ENCODE measurements at regions of chr2 and their contacts with region 1.

Region 1: GRCh38 chr2:191051825-191052778 is 38.1 kb upstream of the STAT1 start:
- DNase-seq: peak in 3 of 9 experiments; percentile 60 to 77 (median 67)
- ATAC-seq: peak; percentile 72
- H3K4me3 ChIP-seq: no peak overlapping the region
- H3K4me3 Mint-ChIP-seq: no peak overlapping the region
- H3K27ac ChIP-seq: peak overlapping the region in 1 of 2 experiments; percentile 43
- H3K27ac Mint-ChIP-seq: no peak overlapping the region
- H3K4me1 ChIP-seq: peaks cover 18% of the 10 kb centered on the region
- H3K4me1 Mint-ChIP-seq: peaks cover 26% of the 10 kb centered on the region
- H3K27me3 ChIP-seq: no peaks in the 10 kb centered on the region
- H3K27me3 Mint-ChIP-seq: no peaks in the 10 kb centered on the region
- CTCF ChIP-seq: peak; percentile 99

Region 2: GRCh38 chr2:191066197-191066918 is 14.3 kb after region 1 on chr2:
- CTCF ChIA-PET with region 1: interaction called, 68 read pairs
- POLR2A ChIA-PET with region 1: interaction called, 15 read pairs
- intact Hi-C with region 1: loop called in 1 of 2 experiments (anchors 1 kb)
- DNase-seq: peak in 1 of 9 experiments; percentile 46
- ATAC-seq: no peak
- H3K4me3 ChIP-seq: peak overlapping the region in 1 of 2 experiments; percentile 48
- H3K4me3 Mint-ChIP-seq: peak overlapping the region; percentile 75
- H3K27ac ChIP-seq: peak overlapping the region; percentile 4 to 62
- H3K27ac Mint-ChIP-seq: peak overlapping the region; percentile 86
- H3K4me1 ChIP-seq: peaks cover 76% of the 10 kb centered on the region
- H3K4me1 Mint-ChIP-seq: peaks cover 84% of the 10 kb centered on the region
- H3K27me3 ChIP-seq: no peaks in the 10 kb centered on the region
- H3K27me3 Mint-ChIP-seq: no peaks in the 10 kb centered on the region
- CTCF ChIP-seq: no peak

Region 3: DNA sequence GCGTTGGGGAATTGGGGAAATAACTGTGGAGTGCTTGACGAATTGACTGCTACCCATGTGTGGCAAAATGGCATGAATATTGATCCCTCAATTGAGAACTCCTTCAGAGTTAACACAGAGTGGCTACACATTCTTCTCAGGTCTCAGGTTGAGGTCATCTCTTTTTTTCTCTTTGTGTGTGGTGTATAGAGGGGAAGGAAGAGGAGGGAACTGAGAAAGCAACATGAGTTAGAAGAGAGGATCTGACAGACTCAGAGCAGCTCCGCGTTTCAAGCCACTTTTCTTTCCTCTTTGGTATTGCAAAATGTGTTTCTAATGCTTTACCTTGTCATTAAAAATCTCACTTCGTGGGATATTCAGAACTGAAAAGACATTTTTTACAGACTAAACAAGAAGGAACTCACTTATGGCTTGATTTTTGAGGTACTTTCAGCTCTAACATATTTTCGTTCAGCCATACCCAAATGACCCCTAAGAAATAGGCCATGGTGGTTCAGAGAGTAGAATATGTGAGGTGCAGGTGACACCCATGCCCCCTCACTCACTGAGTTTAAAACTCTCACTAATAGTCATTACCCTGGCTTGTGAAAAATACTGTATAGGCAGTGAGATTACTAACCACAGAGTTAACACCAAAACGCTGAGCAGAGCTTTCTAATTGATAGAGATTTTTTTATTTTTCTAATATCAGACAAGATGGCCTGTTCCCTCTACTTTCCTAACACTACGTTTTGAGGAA is 76.2 kb after region 1 on chr2:
- CTCF ChIA-PET with region 1: interaction called, 11 read pairs
- POLR2A ChIA-PET with region 1: interaction called, 4 read pairs
- intact Hi-C with region 1: no loop called
- DNase-seq: peak in 2 of 9 experiments; percentile 68 to 79
- ATAC-seq: peak; percentile 78
- H3K4me3 ChIP-seq: peak overlapping the region; percentile 0 to 31
- H3K4me3 Mint-ChIP-seq: peak overlapping the region; percentile 60
- H3K27ac ChIP-seq: peak overlapping the region; percentile 39 to 91
- H3K27ac Mint-ChIP-seq: peak overlapping the region; percentile 62
- H3K4me1 ChIP-seq: peaks cover 38% of the 10 kb centered on the region
- H3K4me1 Mint-ChIP-seq: peaks cover 70% of the 10 kb centered on the region
- H3K27me3 ChIP-seq: no peaks in the 10 kb centered on the region
- H3K27me3 Mint-ChIP-seq: no peaks in the 10 kb centered on the region
- CTCF ChIP-seq: no peak

Region 4: DNA sequence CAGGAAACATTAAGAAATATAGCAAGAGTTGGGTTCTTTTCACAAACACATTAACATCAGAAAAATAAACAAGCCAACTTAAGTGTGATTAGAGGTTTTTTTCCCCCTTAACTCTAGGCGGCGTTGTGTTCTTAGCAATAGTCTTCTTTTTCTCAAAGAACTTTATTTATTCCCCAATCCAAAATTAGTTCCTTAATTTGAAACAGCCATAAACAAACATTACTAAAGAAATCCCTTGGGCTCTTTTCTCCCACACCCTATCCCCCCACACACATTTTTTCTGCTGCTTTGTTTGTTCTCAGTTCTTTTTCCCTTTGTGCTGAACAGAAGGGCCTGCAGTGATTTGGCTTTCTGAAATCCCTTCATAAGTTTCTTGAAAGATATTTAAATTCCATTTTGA is 179.9 kb after region 1 on chr2:
- CTCF ChIA-PET with region 1: no interaction called
- POLR2A ChIA-PET with region 1: no interaction called
- intact Hi-C with region 1: no loop called
- DNase-seq: no peak
- ATAC-seq: no peak
- H3K4me3 ChIP-seq: no peak overlapping the region
- H3K4me3 Mint-ChIP-seq: no peak overlapping the region
- H3K27ac ChIP-seq: no peak overlapping the region
- H3K27ac Mint-ChIP-seq: no peak overlapping the region
- H3K4me1 ChIP-seq: no peaks in the 10 kb centered on the region
- H3K4me1 Mint-ChIP-seq: no peaks in the 10 kb centered on the region
- H3K27me3 ChIP-seq: no peaks in the 10 kb centered on the region
- H3K27me3 Mint-ChIP-seq: no peaks in the 10 kb centered on the region
- CTCF ChIP-seq: no peak

Region 5: DNA sequence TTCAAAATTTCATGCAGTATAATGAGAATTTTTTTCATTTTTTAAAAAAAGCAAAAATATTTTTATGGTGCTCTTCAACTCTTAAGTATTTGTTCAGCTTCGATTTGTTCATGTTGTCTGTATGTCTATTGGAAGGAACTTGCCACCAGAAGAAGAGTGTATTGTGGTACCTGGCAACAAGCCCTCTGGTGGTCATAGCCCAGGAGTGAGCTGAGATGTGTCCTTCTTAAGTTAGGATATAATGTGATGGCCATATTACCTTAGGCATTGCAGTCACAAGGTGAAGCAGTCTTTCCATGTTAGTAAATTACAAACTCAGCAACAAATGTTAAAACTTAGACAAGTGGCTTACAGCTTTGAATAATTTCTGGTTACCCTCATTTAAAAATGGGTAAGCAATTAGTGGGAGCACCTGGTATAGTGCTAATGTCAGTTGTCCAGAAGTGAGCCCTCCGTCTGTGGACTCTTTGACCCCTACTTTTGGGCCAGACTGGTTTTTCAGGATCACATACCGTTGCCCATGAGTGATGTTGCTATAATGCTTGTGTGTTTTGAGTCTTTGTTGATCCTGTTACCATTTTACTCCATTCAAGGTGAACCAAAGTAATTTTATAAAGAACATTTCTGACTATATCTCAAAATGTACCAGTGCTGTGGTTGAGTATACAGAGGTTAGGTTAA is 250.5 kb after region 1 on chr2:
- CTCF ChIA-PET with region 1: no interaction called
- POLR2A ChIA-PET with region 1: no interaction called
- intact Hi-C with region 1: loop called (anchors 1 to 10 kb)
- DNase-seq: peak in 4 of 9 experiments; percentile 13 to 60 (median 38)
- ATAC-seq: peak; percentile 46
- H3K4me3 ChIP-seq: no peak overlapping the region
- H3K4me3 Mint-ChIP-seq: no peak overlapping the region
- H3K27ac ChIP-seq: no peak overlapping the region
- H3K27ac Mint-ChIP-seq: no peak overlapping the region
- H3K4me1 ChIP-seq: no peaks in the 10 kb centered on the region
- H3K4me1 Mint-ChIP-seq: no peaks in the 10 kb centered on the region
- H3K27me3 ChIP-seq: no peaks in the 10 kb centered on the region
- H3K27me3 Mint-ChIP-seq: peaks cover 6% of the 10 kb centered on the region
- CTCF ChIP-seq: no peak

Region 6: DNA sequence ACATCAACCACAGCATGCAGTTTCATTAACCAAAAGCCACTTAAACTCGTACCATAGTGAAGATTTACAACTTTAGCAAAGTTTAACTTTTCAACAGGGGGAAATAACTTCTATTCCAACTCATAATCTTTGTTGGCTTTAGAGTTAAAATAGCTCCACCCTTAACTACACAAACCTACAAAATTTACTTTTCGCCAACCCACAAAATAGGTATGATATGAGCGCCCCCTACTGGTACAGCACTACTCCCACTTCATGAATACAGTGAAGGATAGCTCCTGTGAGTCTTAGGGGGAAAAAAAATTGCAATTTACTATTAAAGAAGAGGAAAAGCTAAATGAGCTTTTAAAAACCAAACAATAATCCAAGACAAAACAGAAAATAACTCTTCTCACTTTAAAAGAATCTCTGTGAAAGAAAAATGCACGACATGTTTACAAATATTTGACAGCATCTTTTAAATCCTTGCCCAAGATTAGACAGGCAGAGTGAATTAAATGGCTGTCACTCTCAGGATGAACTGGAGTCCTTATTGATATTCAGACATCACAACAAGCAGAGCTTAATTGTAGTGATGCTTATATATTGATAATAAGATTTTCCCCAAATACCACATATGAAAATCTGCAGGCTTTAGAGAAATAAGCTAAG is 1110.4 kb after region 1 on chr2:
- CTCF ChIA-PET with region 1: no interaction called
- POLR2A ChIA-PET with region 1: no interaction called
- intact Hi-C with region 1: loop called in 1 of 2 experiments (anchors 10 kb)
- DNase-seq: peak; percentile 23 to 74 (median 64)
- ATAC-seq: peak; percentile 49
- H3K4me3 ChIP-seq: no peak overlapping the region
- H3K4me3 Mint-ChIP-seq: peak overlapping the region; percentile 4
- H3K27ac ChIP-seq: no peak overlapping the region
- H3K27ac Mint-ChIP-seq: no peak overlapping the region
- H3K4me1 ChIP-seq: peaks cover 4% of the 10 kb centered on the region
- H3K4me1 Mint-ChIP-seq: peaks cover 9% of the 10 kb centered on the region
- H3K27me3 ChIP-seq: no peaks in the 10 kb centered on the region
- H3K27me3 Mint-ChIP-seq: peaks cover 11% of the 10 kb centered on the region
- CTCF ChIP-seq: peak; percentile 89